T-cell (primary cell): ENCODE measurements at regions of chr10 and their contacts with region 1.

Region 1: DNA sequence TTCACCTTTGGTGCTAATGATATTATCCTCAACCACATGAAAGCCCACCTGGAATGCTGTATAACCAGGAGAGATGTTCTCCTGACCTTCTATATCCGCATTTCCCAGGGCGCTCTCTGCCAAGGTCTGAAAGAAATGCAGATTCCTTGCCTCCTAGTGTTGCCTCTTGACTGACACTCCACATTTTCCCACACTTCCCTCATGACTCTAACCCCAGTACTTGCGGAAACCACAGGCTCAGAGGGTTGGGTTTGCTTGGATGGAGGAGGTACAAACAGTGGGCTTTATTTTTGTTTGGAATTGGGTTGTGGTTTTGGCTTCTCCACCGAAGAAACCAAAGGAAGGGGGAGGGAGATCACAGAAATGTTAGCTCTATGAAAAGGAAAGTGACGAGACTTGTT is 222.9 kb upstream of the CELF2 start:
- DNase-seq: no peak
- ATAC-seq: no peak
- H3K4me3 ChIP-seq: no peak overlapping the region
- H3K4me3 Mint-ChIP-seq: no peak overlapping the region
- H3K27ac ChIP-seq: no peak overlapping the region
- H3K27ac Mint-ChIP-seq: no peak overlapping the region
- H3K4me1 ChIP-seq: no peaks in the 10 kb centered on the region
- H3K4me1 Mint-ChIP-seq: no peaks in the 10 kb centered on the region
- H3K27me3 ChIP-seq: peaks cover 0 to 5% of the 10 kb centered on the region in 2 experiments
- H3K27me3 Mint-ChIP-seq: peaks cover 34 to 38% of the 10 kb centered on the region in 2 donors

Region 2: GRCh38 chr10:11663763-11664555 is 869.2 kb after region 1 on chr10:
- CTCF ChIA-PET with region 1: interaction called in 1 of 2 experiments, 10 read pairs
- POLR2A ChIA-PET with region 1: no interaction called
- DNase-seq: peak in 1 of 35 experiments; percentile 8
- ATAC-seq: no peak
- H3K4me3 ChIP-seq: no peak overlapping the region
- H3K4me3 Mint-ChIP-seq: no peak overlapping the region
- H3K27ac ChIP-seq: no peak overlapping the region
- H3K27ac Mint-ChIP-seq: no peak overlapping the region
- H3K4me1 ChIP-seq: peaks cover 0 to 8% of the 10 kb centered on the region in 2 experiments
- H3K4me1 Mint-ChIP-seq: peaks cover 9 to 25% (median 13%) of the 10 kb centered on the region in 3 donors
- H3K27me3 ChIP-seq: peaks cover 0 to 9% of the 10 kb centered on the region in 2 experiments
- H3K27me3 Mint-ChIP-seq: peaks cover 0 to 2% of the 10 kb centered on the region in 2 donors